CD14-positive monocyte (primary cell): ENCODE measurements at regions of chr3 and their contacts with region 1.

Region 1: DNA sequence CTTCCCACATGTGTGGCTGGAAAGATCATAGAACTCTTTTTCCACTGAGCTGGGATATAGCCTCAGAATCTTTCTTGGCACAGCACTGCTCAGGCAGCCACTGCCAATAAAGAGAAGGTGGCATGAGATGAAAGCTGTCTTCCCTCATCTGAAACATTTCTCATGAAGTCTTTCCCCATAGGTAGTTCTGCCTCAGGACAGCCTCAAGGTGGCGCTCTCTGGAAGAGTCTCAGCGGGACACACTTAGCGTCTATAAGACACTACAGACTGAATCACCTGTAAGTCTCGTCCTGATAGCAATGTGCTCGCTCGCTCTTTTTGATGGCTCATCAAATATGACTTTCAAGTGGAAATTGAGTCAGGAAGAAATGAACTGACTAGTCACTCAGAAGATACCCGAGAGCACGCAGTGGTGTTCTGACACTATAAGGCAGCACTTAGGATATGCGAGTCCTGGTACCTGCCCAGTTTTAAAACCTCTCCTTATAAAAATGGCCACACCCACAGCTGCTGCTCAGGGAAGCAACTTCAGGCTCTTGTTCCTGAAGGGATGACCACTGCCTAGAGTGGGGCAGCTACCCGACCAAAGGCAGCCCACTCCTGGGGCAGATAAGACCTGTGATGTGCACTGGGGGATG is 269.5 kb downstream of the SUCLG2 start:
- DNase-seq: peak in 2 of 3 donors; percentile 2 to 6
- H3K4me3 ChIP-seq: no peak overlapping the region
- H3K4me3 Mint-ChIP-seq: no peak overlapping the region
- H3K27ac ChIP-seq: no peak overlapping the region
- H3K27ac Mint-ChIP-seq: no peak overlapping the region
- H3K4me1 ChIP-seq: no peaks in the 10 kb centered on the region
- H3K4me1 Mint-ChIP-seq: peaks cover 4% of the 10 kb centered on the region
- H3K27me3 ChIP-seq: no peaks in the 10 kb centered on the region
- H3K27me3 Mint-ChIP-seq: peaks cover 0 to 5% (median 2%) of the 10 kb centered on the region in 3 donors
- CTCF ChIP-seq: peak; percentile 47

Region 2: GRCh38 chr3:67790043-67790442 is 405.2 kb after region 1 on chr3:
- intact Hi-C with region 1: loop called in 1 of 2 experiments (anchors 10 kb)
- DNase-seq: peak in 2 of 3 donors; percentile 2 to 12
- H3K4me3 ChIP-seq: no peak overlapping the region
- H3K4me3 Mint-ChIP-seq: no peak overlapping the region
- H3K27ac ChIP-seq: no peak overlapping the region
- H3K27ac Mint-ChIP-seq: no peak overlapping the region
- H3K4me1 ChIP-seq: no peaks in the 10 kb centered on the region
- H3K4me1 Mint-ChIP-seq: no peaks in the 10 kb centered on the region
- H3K27me3 ChIP-seq: no peaks in the 10 kb centered on the region
- H3K27me3 Mint-ChIP-seq: peaks cover 0 to 3% (median 1%) of the 10 kb centered on the region in 3 donors
- CTCF ChIP-seq: peak; percentile 44

Region 3: DNA sequence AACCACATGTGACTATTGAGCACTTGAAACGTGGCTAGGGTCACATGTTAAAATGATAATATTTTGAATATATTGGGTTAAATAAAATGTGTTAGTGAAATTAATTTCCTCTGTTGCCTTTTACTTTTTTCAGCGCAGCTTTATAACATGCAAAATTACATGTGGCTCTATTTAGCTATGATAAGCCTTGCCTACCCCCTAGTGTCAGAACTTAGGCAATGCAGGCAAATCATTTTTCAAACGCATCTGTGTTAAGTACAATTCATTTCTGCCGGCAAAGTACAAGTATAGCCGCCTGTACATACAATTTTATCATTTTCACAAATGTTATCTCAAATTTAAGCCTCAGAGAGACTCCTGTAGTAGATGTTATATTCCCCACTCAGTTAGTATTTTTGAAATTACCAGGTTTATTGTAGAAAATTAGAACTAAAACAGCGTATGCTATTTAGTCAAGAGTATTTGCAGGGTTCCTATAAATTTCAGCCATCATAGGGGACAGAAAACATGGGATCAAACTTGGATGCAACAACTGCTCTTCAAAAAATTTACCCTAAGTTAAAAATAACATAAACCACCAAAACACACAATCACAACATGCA is 1491.3 kb after region 1 on chr3:
- intact Hi-C with region 1: loop called in 1 of 2 experiments (anchors 10 kb)
- DNase-seq: peak; percentile 10 to 31 (median 22)
- H3K4me3 ChIP-seq: no peak overlapping the region
- H3K4me3 Mint-ChIP-seq: no peak overlapping the region
- H3K27ac ChIP-seq: no peak overlapping the region
- H3K27ac Mint-ChIP-seq: peak overlapping the region in 1 of 7 donors; percentile 48
- H3K4me1 ChIP-seq: no peaks in the 10 kb centered on the region
- H3K4me1 Mint-ChIP-seq: no peaks in the 10 kb centered on the region
- H3K27me3 ChIP-seq: no peaks in the 10 kb centered on the region
- H3K27me3 Mint-ChIP-seq: peaks cover 0 to 3% (median 2%) of the 10 kb centered on the region in 3 donors
- CTCF ChIP-seq: peak; percentile 83